Calu3 (cell line): ENCODE measurements at regions of chr5 and their contacts with region 1.

Region 1: GRCh38 chr5:141524604-141525597 is 36.0 kb downstream of the PCDHGC5 start:
- DNase-seq: peak; percentile 90
- H3K4me3 Mint-ChIP-seq: peak overlapping the region; percentile 5
- H3K27ac Mint-ChIP-seq: peak overlapping the region; percentile 7
- H3K4me1 Mint-ChIP-seq: peaks cover 61% of the 10 kb centered on the region
- H3K27me3 Mint-ChIP-seq: no peaks in the 10 kb centered on the region
- CTCF ChIP-seq: peak; percentile 100

Region 2: DNA sequence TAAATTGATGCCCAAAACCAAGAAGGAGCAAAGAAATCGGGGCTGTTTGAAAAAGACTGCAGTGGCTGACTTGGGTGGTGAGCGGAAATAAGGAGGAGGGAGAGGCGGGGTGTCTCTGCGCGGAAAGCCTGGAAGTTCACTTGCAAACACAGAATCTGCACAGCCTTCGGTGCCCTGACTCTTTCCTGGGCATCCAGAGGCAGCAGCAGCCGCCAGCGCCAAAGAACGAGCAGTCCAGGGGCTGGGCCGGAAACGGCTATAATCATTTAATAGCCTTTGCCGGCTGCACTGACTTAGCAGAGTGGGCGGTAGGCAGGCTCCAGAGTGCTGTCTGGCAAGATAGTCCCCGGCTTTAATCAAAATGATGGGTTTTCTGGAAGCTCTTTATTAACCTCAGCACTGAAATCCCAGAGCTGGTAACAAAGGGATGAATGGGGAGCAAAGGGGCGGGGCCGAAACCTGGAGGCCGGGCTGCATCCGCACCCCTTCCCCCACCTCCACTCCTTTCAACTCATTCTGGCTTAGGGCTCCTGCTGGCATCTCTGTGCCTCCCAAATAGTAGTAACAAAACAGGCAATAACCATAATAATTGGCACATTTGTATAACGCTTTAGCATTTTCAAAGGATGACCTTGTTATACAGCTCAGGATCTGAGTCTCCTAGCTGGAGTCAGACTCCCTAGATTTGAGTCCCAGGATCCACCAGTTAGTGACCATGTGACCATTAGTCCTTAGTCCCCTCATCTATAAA is 522.9 kb before region 1 on chr5:
- CTCF ChIA-PET with region 1: no interaction called
- intact Hi-C with region 1: loop called (anchors 10 kb)
- DNase-seq: peak; percentile 25
- H3K4me3 Mint-ChIP-seq: peak overlapping the region; percentile 70
- H3K27ac Mint-ChIP-seq: peak overlapping the region; percentile 98
- H3K4me1 Mint-ChIP-seq: peaks cover 49% of the 10 kb centered on the region
- H3K27me3 Mint-ChIP-seq: no peaks in the 10 kb centered on the region
- CTCF ChIP-seq: no peak

Region 3: DNA sequence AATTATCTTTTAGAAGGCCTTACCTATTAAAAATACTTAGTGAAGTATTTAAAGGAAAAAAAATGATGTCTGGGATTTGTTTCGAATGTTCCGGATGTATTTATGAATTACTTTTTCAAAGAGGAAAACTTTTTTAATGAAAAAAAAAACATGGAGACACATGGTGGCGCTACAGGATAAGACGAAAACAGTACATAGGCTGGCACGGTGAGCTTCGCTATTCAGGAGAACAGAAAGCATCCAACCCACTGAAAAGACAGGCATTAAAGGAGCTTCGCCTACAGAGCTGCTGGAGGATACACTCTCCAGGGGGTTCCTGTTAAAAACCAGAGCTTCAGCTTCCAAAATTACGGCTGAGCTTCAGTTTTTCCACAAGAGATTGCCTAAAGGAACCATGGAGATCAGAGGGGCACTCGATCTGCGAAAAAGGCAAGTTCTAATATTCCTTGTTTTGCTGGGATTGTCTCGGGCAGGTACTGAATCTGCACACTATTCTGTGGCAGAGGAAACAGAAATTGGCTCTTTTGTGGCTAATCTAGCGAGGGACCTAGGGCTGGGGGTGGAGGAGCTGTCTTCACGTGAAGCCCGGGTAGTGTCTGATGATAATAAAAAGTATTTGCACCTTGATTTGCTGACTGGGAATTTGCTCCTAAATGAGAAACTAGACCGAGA is 301.7 kb before region 1 on chr5 and contains the start of gene PCDHB14:
- CTCF ChIA-PET with region 1: interaction called, 16 read pairs
- intact Hi-C with region 1: loop called (anchors 1 kb)
- DNase-seq: peak; percentile 66
- H3K4me3 Mint-ChIP-seq: peak within 1 kb of the TSS; percentile 75
- H3K27ac Mint-ChIP-seq: peak within 1 kb of the TSS; percentile 60
- H3K4me1 Mint-ChIP-seq: no peaks in the 10 kb centered on the region
- H3K27me3 Mint-ChIP-seq: no peaks in the 10 kb centered on the region
- CTCF ChIP-seq: peak; percentile 63
- total RNA-seq, gene PCDHB14: 5.7 and 6.3 TPM in 2 replicates

Region 4: DNA sequence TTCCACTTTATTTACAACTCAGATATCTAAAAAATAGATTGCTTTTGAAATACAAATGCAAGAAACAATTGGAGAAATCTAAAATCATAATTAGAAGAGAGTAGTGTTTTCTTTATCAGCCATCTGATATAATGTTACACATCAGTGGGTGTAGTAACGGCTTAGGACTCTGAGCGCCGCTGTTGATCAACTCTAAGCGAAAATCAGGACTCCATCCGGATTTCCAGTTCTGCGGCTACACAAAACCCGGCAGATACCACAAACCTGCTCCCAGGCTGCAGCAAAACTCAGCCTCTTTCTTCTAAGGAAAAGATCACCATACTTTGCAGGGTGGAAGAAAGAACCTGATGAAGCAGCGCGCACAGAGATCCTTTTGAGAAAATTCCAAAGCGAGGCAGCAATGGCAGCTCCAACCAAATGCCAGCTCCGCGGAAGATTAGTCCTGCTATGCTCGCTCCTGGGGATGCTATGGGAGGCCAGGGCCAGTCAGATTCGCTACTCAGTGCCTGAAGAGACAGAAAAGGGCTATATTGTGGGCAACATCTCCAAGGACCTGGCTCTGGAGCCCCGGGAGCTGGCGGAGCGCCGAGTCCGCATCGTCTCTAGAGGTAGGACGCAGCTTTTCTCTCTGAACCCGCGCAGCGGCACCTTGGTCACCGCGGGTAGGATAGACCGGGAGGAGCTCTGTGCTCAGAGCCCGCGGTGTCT is 122.2 kb before region 1 on chr5 and contains the start of gene PCDHGA9:
- CTCF ChIA-PET with region 1: interaction called, 13 read pairs
- intact Hi-C with region 1: loop called (anchors 1 kb)
- DNase-seq: peak; percentile 73
- H3K4me3 Mint-ChIP-seq: peak within 1 kb of the TSS; percentile 95
- H3K27ac Mint-ChIP-seq: peak within 1 kb of the TSS; percentile 68
- H3K4me1 Mint-ChIP-seq: peaks cover 17% of the 10 kb centered on the region
- H3K27me3 Mint-ChIP-seq: no peaks in the 10 kb centered on the region
- CTCF ChIP-seq: peak; percentile 83
- total RNA-seq, gene PCDHGA9: 16.0 and 18.1 TPM in 2 replicates

Region 5: DNA sequence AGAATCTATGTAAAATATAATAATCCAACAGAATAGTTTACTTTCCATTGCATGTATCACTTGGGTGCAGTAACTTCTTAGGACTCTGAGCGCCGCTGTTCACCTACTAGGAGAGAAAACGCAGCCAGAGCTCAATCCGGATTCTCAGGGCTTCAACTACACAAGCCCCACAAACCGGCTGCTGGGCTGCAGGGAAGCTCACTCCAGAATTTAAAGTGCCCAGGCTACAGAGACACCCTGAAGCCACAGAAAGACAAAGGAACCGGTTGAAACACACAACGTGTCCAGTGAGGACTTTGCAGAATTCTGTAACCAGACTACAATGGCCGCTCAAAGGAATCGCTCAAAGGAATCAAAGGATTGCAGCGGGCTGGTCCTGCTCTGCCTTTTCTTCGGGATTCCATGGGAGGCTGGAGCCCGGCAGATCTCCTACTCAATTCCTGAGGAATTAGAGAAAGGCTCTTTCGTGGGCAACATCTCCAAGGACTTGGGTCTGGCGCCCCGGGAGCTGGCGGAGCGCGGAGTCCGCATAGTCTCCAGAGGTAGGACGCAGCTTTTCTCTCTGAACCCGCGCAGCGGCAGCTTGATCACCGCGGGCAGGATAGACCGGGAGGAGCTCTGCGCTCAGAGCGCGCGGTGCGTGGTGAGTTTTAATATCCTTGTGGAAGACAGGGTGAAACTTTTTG is 111.9 kb before region 1 on chr5 and contains the start of gene PCDHGA10:
- CTCF ChIA-PET with region 1: interaction called, 13 read pairs
- intact Hi-C with region 1: loop called (anchors 1 kb)
- DNase-seq: no peak
- H3K4me3 Mint-ChIP-seq: no peak within 1 kb of the TSS
- H3K27ac Mint-ChIP-seq: no peak within 1 kb of the TSS
- H3K4me1 Mint-ChIP-seq: peaks cover 24% of the 10 kb centered on the region
- H3K27me3 Mint-ChIP-seq: no peaks in the 10 kb centered on the region
- CTCF ChIP-seq: no peak
- total RNA-seq, gene PCDHGA10: 2.6 and 3.7 TPM in 2 replicates

Region 6: GRCh38 chr5:141475625-141476131 is 49.2 kb before region 1 on chr5 and contains the start of gene PCDHGC3:
- CTCF ChIA-PET with region 1: interaction called, 27 read pairs
- intact Hi-C with region 1: loop called (anchors 2 kb)
- DNase-seq: peak; percentile 95
- H3K4me3 Mint-ChIP-seq: peak within 1 kb of the TSS; percentile 91
- H3K27ac Mint-ChIP-seq: peak within 1 kb of the TSS; percentile 80
- H3K4me1 Mint-ChIP-seq: peaks cover 10% of the 10 kb centered on the region
- H3K27me3 Mint-ChIP-seq: no peaks in the 10 kb centered on the region
- CTCF ChIP-seq: no peak
- total RNA-seq, gene PCDHGC3: 49.4 and 73.0 TPM in 2 replicates

Region 7: DNA sequence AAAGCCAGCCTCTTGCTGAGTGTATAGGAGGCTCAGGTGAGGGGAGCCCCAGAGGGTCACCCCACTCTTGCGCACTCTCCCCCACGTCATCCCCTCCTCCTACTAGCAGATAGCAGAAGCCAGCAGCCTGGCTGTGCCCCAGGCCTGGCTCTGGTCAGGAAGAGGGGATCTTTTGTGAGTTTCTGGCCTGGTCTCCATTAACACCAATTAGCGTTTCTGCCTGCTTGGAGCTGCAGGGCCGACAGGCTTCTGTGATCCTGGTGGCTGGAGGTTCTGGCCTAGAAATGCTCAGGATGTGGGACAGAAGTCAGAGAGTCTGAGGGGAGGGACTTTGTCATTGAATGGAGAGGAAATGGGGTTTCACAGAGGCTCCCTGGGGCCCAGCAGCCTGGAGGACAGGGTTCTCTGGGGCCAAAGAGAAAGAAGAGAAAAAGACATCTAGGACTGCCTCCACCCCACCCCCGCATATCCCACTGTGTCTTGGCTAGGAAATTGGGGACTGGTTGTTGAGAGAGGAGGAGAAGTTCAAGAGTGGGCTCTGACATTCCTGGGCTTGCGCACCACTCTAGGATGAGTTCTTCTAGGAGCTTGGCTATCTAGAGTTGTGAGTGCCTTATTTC is 204.6 kb after region 1 on chr5:
- CTCF ChIA-PET with region 1: no interaction called
- intact Hi-C with region 1: no loop called
- DNase-seq: no peak
- H3K4me3 Mint-ChIP-seq: no peak overlapping the region
- H3K27ac Mint-ChIP-seq: no peak overlapping the region
- H3K4me1 Mint-ChIP-seq: peaks cover 9% of the 10 kb centered on the region
- H3K27me3 Mint-ChIP-seq: peaks cover 67% of the 10 kb centered on the region
- CTCF ChIP-seq: no peak